SK-N-SH (cell line): ENCODE measurements at regions of chr1 and their contacts with region 1.

Region 1: GRCh38 chr1:223081181-223081994 is 61.7 kb downstream of the TLR5 start:
- DNase-seq: peak; percentile 91
- H3K4me3 ChIP-seq: peak overlapping the region; percentile 43 to 52; a peak in 3 of 4 replicates
- H3K27ac ChIP-seq: peak overlapping the region in 1 of 2 experiments; percentile 25; a peak in 1 of 4 replicates
- H3K4me1 ChIP-seq: peaks cover 0 to 12% of the 10 kb centered on the region in 2 experiments; a peak in 1 of 4 replicates
- H3K27me3 ChIP-seq: no peaks in the 10 kb centered on the region; the same call in 1 of the 2 replicates
- CTCF ChIP-seq: peak; percentile 90
- EP300 ChIP-seq: no peak
- RAD21 ChIP-seq: peak; percentile 98

Region 2: DNA sequence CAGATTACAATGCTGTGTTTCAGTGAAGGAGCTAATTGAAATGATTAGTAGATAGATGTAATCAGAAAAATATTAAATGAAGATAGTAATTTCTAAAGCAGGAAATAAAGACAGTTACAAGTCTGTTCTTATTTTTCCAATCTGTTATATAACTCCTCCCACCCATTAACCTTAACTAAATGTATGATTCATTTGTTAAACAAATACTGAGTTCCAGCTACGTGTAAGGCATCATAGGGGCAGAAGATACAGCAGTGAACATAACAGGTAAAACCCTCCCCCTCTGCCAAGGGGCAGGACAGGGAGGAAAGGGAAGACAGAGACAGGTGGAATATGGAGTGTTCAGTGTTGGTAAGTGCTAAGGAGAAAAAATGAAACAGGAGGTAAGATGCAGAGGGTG is 344.4 kb before region 1 on chr1 and contains the start of gene FAM177B:
- CTCF ChIA-PET with region 1: interaction called, 10 read pairs
- POLR2A ChIA-PET with region 1: no interaction called
- DNase-seq: no peak
- H3K4me3 ChIP-seq: no peak within 1 kb of the TSS
- H3K27ac ChIP-seq: no peak within 1 kb of the TSS
- H3K4me1 ChIP-seq: no peaks in the 10 kb centered on the region
- H3K27me3 ChIP-seq: no peaks in the 10 kb centered on the region
- CTCF ChIP-seq: no peak
- EP300 ChIP-seq: no peak
- RAD21 ChIP-seq: no peak
- polyA plus RNA-seq, gene FAM177B: not detected in 2 replicates

Region 3: GRCh38 chr1:222750651-222751050 is 330.7 kb before region 1 on chr1:
- CTCF ChIA-PET with region 1: interaction called, 10 read pairs
- POLR2A ChIA-PET with region 1: no interaction called
- DNase-seq: no peak
- H3K4me3 ChIP-seq: no peak overlapping the region
- H3K27ac ChIP-seq: no peak overlapping the region
- H3K4me1 ChIP-seq: peaks cover 0 to 3% of the 10 kb centered on the region in 2 experiments; a peak in 1 of 4 replicates
- H3K27me3 ChIP-seq: no peaks in the 10 kb centered on the region
- CTCF ChIP-seq: no peak
- EP300 ChIP-seq: no peak
- RAD21 ChIP-seq: no peak

Region 4: GRCh38 chr1:222792744-222793143 is 288.6 kb before region 1 on chr1:
- CTCF ChIA-PET with region 1: interaction called, 69 read pairs
- POLR2A ChIA-PET with region 1: no interaction called
- DNase-seq: peak; percentile 68
- H3K4me3 ChIP-seq: no peak overlapping the region
- H3K27ac ChIP-seq: no peak overlapping the region
- H3K4me1 ChIP-seq: no peaks in the 10 kb centered on the region; a peak in 1 of 4 replicates
- H3K27me3 ChIP-seq: no peaks in the 10 kb centered on the region
- CTCF ChIP-seq: peak; percentile 78
- EP300 ChIP-seq: no peak
- RAD21 ChIP-seq: peak; percentile 93

Region 5: GRCh38 chr1:223285452-223285851 is 204.1 kb after region 1 on chr1:
- CTCF ChIA-PET with region 1: no interaction called
- POLR2A ChIA-PET with region 1: no interaction called
- DNase-seq: no peak
- H3K4me3 ChIP-seq: no peak overlapping the region
- H3K27ac ChIP-seq: no peak overlapping the region
- H3K4me1 ChIP-seq: no peaks in the 10 kb centered on the region
- H3K27me3 ChIP-seq: no peaks in the 10 kb centered on the region
- CTCF ChIP-seq: no peak
- EP300 ChIP-seq: no peak
- RAD21 ChIP-seq: no peak